Spleen (tissue), 13 donors: ENCODE measurements at regions of chr22 and their contacts with region 1.

Region 1: GRCh38 chr22:36180038-36180880 is 19.7 kb upstream of the APOL3 start:
- DNase-seq: peak; percentile 95
- H3K4me3 ChIP-seq: no peak overlapping the region
- H3K27ac ChIP-seq: no peak overlapping the region
- H3K4me1 ChIP-seq: peaks cover 0 to 15% (median 12%) of the 10 kb centered on the region in 6 donors
- H3K27me3 ChIP-seq: no peaks in the 10 kb centered on the region
- CTCF ChIP-seq: peak; percentile 68 to 94 (median 90)
- POLR2A ChIP-seq: no peak

Region 2: DNA sequence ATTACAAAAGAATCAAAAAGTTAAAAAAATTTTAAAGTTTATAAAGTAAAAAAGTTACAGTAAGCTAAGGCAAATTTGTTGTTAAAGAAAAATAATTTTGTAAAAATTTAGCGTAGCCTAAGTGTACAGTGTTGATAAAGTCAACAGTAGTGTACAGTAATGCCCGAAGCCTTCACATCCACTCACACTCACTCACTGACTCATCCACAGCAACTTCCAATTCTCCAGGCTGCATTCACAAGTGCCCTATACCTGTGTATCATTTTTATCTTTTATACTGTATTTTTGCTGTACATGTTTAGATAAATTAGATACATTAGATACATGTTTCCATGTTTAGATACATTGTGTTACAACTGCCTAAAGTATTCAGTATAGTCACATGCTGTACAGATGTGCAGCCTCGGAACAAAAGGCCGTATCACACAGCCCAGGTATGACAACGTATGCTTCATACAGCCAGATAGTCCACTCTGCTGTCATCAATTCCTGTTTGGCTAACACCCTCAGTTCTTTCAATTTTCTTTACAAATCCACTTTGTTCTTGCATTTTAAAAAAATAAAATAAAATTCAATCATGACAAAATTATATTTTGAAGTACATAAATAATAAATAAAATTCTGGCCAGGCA is 232.3 kb before region 1 on chr22:
- intact Hi-C with region 1: no loop called
- DNase-seq: no peak
- H3K4me3 ChIP-seq: no peak overlapping the region
- H3K27ac ChIP-seq: no peak overlapping the region
- H3K4me1 ChIP-seq: no peaks in the 10 kb centered on the region
- H3K27me3 ChIP-seq: no peaks in the 10 kb centered on the region
- CTCF ChIP-seq: no peak
- POLR2A ChIP-seq: no peak

Region 3: DNA sequence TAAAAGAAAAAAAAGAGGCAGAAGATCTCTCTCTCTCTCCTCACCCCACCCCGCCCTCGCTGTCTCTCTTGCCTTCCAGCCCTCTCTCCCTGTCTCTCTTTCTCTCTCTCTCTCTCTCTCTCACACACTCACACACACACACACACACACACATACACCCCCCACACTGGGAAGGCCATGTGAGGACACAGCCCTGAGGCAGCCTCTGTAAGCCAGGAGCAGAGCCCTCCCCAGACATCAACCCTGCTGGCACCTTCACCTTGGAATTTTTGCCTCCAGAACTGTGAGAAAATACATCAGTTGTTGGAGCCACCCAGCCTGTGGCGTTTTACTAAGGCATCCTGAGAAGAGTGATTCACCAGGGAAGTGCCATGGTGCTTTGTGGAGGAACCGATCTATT is 34.4 kb before region 1 on chr22:
- intact Hi-C with region 1: loop called (anchors 2 kb)
- DNase-seq: no peak
- H3K4me3 ChIP-seq: no peak overlapping the region
- H3K27ac ChIP-seq: peak overlapping the region in 5 of 8 donors; percentile 53 to 67 (median 56)
- H3K4me1 ChIP-seq: peaks cover 9 to 61% (median 42%) of the 10 kb centered on the region in 6 donors
- H3K27me3 ChIP-seq: no peaks in the 10 kb centered on the region
- CTCF ChIP-seq: no peak
- POLR2A ChIP-seq: no peak

Region 4: DNA sequence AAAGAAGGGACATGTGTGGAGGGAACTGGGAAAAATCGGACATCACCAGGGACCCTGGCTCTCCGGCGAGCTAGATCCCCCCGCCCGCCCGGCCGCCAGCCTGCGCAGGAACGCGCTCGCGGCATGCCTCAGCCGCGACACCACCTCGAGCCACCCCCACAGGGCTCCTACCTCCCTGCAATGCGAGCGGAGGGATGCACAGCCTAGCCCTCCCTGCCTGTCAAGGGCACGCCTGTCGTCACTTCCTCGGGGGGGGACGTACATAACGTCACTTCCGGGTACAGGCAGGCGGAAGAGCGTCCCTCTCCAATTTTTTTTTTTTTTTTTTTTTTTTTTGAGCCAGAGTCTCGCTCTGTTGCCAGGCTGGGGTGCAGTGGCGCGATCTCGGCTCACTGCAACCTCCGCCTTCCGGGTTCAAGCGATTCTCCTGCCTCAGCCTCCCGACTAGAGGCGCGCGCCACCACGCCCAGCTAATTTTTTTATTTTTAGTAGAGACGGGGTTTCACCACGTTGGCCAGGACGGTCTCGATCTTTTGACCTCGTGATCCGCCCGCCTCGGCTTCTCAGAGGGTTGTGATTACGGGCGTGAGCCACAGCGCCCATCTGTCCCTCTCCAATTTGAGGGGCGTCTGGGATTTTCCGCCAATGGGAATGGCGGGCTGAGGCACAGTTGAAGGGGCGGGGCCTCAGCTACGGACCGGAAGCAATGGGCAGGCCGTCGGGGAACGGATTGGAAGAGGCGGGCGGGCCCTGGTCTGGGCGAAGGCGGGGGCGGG is 301.3 kb after region 1 on chr22 and contains the start of gene TXN2:
- intact Hi-C with region 1: loop called (anchors 10 kb)
- DNase-seq: peak; percentile 97
- H3K4me3 ChIP-seq: peak within 1 kb of the TSS; percentile 53 to 75 (median 70)
- H3K27ac ChIP-seq: peak within 1 kb of the TSS; percentile 98 to 100 (median 99)
- H3K4me1 ChIP-seq: peaks cover 9 to 50% (median 36%) of the 10 kb centered on the region in 6 donors
- H3K27me3 ChIP-seq: no peaks in the 10 kb centered on the region
- CTCF ChIP-seq: peak in 1 of 11 experiments; percentile 10
- POLR2A ChIP-seq: peak in 2 of 3 donors; percentile 55 to 93
- total RNA-seq, gene TXN2: 52.6 to 87.1 (median 64.6) TPM